ENCODE measurements at regions of chr6 and their contacts with region 1.

Region 1: DNA sequence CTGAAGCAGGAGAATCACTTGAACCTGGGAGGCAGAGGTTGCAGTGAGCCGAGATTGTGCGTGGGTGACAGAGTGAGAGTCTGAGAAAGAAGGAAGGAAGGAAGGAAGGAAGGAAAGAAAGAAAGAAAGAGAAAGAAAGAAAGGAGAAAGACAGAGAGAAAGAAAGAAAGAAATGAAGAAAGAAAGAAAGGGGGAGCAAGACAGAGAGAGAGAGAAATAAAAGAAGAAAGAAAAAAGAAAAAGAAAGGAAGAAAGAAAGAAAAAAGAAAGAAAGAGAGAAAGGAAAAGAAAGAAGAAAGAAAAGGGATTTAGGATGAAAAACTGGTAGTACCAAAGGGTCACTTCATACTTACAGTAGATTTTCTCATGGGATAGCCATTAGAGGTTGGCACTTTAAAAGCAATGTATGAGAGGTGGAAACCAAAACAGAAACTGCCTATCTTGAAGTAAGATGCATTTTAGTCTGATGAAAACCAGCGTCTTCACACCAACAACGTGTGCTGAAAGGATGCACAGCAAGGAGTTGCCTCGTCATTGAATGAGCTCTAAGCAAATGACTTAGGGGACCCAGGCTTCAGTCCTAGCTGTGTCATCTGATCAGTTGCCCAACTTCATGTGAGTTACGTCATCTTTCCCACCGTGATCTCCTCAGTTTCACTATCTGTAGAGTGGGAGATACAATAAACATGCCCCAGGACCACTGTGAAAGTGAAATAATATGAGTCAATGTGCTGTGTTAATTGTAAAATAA is 133.9 kb upstream of the NEDD9 start:
- DNase-seq: peak; percentile 72
- H3K4me3 Mint-ChIP-seq: peak overlapping the region; percentile 43
- H3K27ac Mint-ChIP-seq: peak overlapping the region; percentile 77
- H3K4me1 Mint-ChIP-seq: peaks cover 95% of the 10 kb centered on the region
- H3K27me3 Mint-ChIP-seq: no peaks in the 10 kb centered on the region

Region 2: DNA sequence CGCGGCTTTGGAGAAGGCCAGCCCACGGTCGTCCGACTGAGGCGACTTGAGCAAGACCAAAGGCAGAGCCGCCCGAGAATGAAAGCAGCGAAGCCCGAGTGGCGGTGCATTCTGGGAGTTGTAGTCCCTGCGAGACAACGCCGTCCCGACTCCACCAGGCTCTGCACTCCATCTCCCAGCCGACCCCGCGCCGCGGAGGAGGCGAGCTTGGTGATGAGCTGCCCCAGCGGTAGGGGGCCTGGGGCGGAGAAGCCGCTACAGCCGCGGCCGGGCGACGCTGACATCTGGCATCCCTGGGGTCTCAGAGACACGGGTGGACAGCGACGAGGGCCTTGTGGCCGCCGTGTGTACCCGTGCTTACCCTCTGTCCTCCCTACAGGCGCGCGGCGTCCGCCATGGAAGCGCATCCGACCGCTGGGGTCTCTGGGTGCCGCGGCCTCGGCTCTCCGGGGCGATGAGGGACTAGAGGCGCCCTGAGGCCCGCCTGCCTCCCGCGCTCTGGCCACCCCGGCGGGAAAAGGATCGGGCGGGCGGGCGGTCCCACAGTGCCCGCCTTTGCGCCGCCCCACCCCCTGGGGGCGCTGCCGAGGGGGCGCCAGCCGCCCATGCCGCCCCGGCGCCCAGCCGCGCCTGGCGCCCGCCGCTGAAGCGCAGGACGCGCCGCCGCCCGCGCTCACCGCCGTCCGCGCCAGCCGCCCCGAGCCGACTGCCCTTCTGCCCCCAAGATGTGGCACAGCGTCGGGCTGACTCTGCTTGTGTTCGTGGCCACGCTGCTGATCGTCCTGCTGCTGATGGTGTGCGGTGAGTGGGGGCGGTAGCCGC is 272.6 kb before region 1 on chr6 and contains the start of gene SMIM13:
- CTCF ChIA-PET with region 1: no interaction called
- POLR2A ChIA-PET with region 1: interaction called, 3 read pairs
- intact Hi-C with region 1: loop called (anchors 5 kb)
- DNase-seq: peak; percentile 97
- H3K4me3 Mint-ChIP-seq: peak within 1 kb of the TSS; percentile 97
- H3K27ac Mint-ChIP-seq: peak within 1 kb of the TSS; percentile 98
- H3K4me1 Mint-ChIP-seq: peaks cover 27% of the 10 kb centered on the region
- H3K27me3 Mint-ChIP-seq: no peaks in the 10 kb centered on the region
- total RNA-seq, gene SMIM13: 7.2 to 9.5 TPM

Region 3: GRCh38 chr6:11277275-11278206 is 88.8 kb before region 1 on chr6:
- CTCF ChIA-PET with region 1: interaction called, 10 read pairs
- POLR2A ChIA-PET with region 1: interaction called, 5 read pairs
- intact Hi-C with region 1: loop called (anchors 1 kb)
- DNase-seq: peak; percentile 72
- H3K4me3 Mint-ChIP-seq: peak overlapping the region; percentile 49
- H3K27ac Mint-ChIP-seq: peak overlapping the region; percentile 93
- H3K4me1 Mint-ChIP-seq: peaks cover 59% of the 10 kb centered on the region
- H3K27me3 Mint-ChIP-seq: no peaks in the 10 kb centered on the region

Region 4: DNA sequence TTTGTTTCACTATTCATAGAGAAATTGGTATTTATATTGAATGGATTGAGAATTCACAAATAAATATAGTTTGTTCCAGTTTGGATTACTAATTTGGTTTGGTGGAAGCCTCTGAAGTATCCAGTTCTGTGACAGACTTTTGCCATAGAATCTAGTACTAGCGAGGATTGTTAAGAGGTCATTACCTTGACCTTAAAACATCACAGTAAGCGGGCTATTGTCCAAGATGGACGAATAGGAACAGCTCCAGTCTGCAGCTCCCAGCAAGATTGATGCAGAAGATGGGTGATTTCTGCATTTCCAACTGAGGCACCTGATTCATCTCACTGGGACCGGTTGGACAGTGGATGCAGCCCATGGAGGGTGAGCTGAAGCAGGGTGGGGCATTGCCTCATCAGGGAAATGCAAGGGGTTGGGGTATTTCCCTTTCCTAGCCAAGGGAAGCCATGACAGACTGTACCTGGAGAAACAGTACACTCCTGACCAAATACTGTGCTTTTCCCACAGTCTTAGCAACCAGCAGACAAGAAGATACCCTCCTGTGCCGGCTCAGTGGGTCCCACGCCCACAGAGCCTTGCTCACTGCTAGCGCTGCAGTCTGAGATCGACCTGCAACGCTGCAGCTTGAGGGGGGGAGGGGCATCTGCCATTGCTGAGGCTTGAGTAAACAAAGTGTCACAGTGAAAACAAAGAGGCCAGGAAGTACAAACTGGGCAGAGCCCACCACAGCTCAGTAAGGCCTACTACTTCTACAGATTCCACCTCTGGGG is 67.5 kb before region 1 on chr6:
- CTCF ChIA-PET with region 1: no interaction called
- POLR2A ChIA-PET with region 1: no interaction called
- intact Hi-C with region 1: no loop called
- DNase-seq: peak; percentile 24
- H3K4me3 Mint-ChIP-seq: no peak overlapping the region
- H3K27ac Mint-ChIP-seq: no peak overlapping the region
- H3K4me1 Mint-ChIP-seq: peaks cover 31% of the 10 kb centered on the region
- H3K27me3 Mint-ChIP-seq: no peaks in the 10 kb centered on the region

Region 5: DNA sequence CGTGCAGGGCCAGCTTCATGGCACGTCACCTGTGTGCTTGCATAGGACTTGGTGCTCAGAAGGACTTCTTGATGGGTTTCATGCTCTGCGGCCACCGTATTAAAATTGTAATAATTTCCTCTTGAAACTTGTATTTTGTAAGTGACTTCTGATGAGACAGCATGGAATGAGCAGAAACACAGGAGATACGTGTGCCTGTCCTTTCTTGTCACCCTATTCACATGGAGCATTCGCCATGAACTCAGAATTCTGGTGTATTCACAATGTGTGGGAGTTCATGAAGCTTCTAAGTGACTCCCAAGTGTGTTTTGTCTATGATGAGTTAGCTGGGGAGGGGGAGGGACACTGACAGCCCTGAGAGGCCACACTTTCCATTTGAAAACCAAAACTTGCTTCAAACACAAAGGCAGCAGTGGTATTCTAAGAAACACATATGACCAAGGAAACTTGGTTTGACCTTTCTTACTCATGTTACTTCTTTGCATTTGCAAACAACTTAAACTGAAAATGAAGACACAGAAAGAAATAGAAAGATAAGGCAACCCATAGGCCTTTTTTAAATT is 41.8 kb before region 1 on chr6:
- CTCF ChIA-PET with region 1: interaction called, 3 read pairs
- POLR2A ChIA-PET with region 1: interaction called, 7 read pairs
- intact Hi-C with region 1: loop called (anchors 1 kb)
- DNase-seq: peak; percentile 83
- H3K4me3 Mint-ChIP-seq: peak overlapping the region; percentile 57
- H3K27ac Mint-ChIP-seq: peak overlapping the region; percentile 85
- H3K4me1 Mint-ChIP-seq: peaks cover 73% of the 10 kb centered on the region
- H3K27me3 Mint-ChIP-seq: no peaks in the 10 kb centered on the region

Region 6: DNA sequence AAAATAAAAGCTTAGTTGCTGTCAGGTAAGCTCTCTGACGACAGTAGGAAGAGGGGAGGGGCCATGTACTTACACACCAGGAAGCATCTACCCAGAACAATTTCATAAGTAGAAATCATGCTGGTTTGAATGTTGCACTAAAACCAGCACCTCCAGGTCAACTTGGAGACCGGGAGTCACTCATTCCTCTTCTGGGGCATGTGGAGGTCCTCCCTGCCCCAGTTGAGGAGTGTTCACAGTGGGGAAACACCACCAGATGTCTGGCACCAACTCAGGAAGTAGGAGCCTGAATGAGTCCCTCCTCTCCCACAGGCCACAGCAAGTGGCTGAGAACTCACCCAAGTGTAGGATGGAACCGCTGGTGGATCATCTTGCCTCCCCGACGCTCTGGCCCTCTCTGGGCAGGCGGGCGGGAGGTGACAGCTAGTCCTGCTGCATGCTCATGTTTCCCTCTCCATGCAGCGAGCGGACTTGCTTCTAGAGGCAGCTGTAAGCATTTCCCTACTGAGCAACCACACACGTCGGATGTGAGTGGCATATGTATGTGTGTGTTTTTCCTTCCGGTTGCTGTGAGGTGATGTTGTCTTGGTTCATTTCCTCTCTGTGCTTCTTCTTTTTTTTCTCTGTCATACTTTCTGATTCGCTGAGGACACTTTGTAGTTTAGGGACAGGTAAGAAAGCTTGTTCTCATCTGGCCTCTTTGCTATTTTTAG is 15.6 kb after region 1 on chr6:
- CTCF ChIA-PET with region 1: interaction called, 13 read pairs
- POLR2A ChIA-PET with region 1: interaction called, 26 read pairs
- intact Hi-C with region 1: loop called (anchors 1 kb)
- DNase-seq: peak; percentile 82
- H3K4me3 Mint-ChIP-seq: peak overlapping the region; percentile 85
- H3K27ac Mint-ChIP-seq: peak overlapping the region; percentile 95
- H3K4me1 Mint-ChIP-seq: peaks cover 58% of the 10 kb centered on the region
- H3K27me3 Mint-ChIP-seq: no peaks in the 10 kb centered on the region

Region 7: DNA sequence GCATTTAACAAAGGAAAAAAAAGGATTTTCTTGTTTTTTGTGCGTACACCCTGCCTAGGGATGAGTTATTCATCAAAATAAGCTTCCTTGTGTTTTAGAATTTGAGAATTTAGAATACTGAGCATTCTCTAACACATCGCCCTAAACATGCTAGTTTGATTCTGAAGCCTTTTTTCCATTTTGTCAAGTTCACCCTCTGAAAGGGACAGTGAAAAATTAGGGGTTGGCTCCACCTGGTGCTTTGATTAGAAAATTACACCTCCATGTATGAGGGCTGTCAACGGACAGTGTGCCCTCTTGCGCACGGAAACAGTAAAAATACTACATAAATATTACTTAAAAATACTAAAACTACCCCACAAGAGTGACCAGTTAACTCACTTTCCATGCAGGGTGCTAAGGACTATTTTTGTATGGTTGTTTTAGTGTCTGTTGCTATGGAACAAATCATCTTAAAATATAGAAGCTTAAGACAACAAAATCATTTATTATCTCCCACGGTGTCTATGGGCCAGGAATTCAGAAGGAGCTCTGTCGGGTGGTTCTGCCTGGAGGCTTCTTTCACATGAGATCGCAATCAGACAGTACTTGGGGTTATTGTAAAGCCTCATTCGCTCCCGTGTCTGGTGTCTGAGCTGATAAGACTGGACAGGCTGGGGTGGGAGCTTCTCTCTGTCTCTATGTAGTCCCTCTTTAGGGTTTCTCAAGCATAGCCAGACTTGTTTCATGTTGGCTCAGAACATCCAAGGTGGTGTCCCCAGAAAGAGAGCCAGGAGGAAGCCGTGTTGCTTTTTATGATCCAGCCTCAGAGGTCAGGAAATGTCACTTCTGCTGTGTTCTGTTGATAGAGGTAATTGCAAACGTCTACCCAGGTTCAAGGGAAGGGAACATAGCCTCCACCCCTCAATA is 130.0 kb after region 1 on chr6:
- CTCF ChIA-PET with region 1: interaction called, 10 read pairs
- POLR2A ChIA-PET with region 1: no interaction called
- intact Hi-C with region 1: no loop called
- DNase-seq: peak; percentile 74
- H3K4me3 Mint-ChIP-seq: no peak overlapping the region
- H3K27ac Mint-ChIP-seq: no peak overlapping the region
- H3K4me1 Mint-ChIP-seq: peaks cover 5% of the 10 kb centered on the region
- H3K27me3 Mint-ChIP-seq: no peaks in the 10 kb centered on the region

Region 8: DNA sequence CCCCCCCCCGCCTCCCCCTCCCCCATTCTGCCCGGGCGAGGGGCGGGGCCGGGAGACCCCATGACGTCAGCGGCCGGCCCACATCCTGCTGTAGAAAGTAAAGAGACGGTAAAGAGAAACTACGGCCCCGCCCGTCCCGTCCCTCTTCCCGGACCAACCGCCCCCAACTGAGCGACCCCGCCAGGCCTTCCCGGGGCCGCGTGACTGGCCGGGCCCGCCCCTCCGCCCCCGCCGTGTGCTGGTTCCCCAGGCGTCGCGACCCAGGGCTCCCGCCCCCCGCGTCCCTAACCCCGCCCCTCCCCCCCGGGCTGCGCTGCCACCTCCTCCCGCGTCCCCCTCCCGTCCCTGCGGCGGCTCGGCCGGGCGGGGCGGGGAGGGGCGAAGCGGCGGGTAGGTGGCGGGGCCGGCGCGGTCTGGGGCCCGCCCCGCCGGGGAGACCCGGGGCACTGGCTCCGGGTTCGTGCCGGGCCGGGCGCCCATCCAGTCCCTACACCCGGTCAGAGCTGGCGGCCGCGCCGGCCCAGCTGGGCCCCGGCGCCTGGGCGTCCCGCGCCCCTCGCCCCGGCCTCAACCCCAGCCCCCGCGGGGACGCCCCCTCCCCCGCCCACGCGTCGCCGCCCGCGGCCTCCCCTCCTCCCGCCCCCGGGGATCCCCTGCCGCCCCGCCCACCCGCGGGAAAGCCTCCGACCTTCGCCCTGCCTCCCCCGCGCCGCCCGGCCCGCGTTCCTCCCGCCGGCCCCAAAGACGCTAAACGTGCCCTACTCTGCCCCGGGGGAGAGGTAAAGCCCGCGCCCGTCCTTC is 645.1 kb after region 1 on chr6:
- CTCF ChIA-PET with region 1: no interaction called
- POLR2A ChIA-PET with region 1: no interaction called
- intact Hi-C with region 1: loop called (anchors 10 kb)
- DNase-seq: peak; percentile 99
- H3K4me3 Mint-ChIP-seq: peak overlapping the region; percentile 90
- H3K27ac Mint-ChIP-seq: peak overlapping the region; percentile 99
- H3K4me1 Mint-ChIP-seq: peaks cover 46% of the 10 kb centered on the region
- H3K27me3 Mint-ChIP-seq: no peaks in the 10 kb centered on the region

Measured in activated CD4-positive, alpha-beta memory T cell treated with anti-CD3 and anti-CD28 coated beads for 36 hours (primary cell).